ENCODE measurements at regions of chr11 and their contacts with region 1.

Region 1: GRCh38 chr11:124970925-124971324 is 16.9 kb downstream of the CCDC15 start:
- DNase-seq: no peak
- ATAC-seq: peak in 1 of 2 donors; percentile 38

Region 2: GRCh38 chr11:124277804-124278203 is 693.1 kb before region 1 on chr11:
- intact Hi-C with region 1: no loop called
- DNase-seq: no peak
- ATAC-seq: no peak

Region 3: DNA sequence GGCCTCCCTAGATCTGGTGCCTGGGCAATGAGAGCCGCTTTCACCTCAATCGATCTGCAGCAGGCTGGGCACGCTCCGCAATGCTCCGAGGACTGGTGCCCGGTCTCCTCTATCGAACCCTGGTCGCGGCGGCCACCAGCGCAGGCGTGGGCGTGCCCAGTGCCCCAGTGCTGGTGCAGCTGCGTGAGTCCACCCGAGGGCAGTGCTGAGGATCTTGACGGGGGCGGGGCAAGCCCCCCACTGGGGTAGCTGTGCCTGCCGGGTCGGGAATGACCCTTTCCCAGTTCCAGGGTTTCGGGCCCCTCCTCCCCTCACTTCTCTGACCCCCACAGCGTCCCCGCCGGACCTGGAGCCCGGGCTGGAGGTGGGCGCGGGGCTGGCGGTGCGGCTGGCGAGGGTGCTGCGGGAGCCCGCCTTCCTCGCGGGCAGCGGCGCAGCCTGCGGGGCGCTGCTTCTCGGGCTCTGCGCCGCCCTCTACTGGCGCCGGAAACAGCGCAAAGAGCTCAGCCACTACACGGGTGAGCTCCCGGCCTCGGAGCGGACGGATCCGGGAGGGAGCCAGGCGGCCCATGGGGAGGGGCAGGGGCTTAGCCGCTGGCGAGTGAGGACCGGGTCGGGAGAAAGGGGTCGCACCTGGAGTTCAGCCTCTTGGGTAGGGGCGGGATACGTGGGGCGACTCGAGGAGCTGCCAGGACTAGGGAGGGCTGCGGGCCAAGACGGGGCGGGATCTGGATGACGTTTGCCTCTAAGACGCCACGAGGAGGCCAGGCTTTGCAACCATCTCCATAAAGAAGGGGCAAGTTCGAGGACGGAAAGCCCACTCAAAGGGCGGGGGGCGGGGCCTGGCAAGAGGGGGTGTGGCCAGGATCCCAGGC is 94.7 kb before region 1 on chr11:
- intact Hi-C with region 1: no loop called
- DNase-seq: peak; percentile 93
- ATAC-seq: peak; percentile 93 to 94

Region 4: GRCh38 chr11:125091247-125091876 is 120.4 kb after region 1 on chr11:
- intact Hi-C with region 1: no loop called
- DNase-seq: no peak
- ATAC-seq: peak; percentile 90 to 91

Region 5: DNA sequence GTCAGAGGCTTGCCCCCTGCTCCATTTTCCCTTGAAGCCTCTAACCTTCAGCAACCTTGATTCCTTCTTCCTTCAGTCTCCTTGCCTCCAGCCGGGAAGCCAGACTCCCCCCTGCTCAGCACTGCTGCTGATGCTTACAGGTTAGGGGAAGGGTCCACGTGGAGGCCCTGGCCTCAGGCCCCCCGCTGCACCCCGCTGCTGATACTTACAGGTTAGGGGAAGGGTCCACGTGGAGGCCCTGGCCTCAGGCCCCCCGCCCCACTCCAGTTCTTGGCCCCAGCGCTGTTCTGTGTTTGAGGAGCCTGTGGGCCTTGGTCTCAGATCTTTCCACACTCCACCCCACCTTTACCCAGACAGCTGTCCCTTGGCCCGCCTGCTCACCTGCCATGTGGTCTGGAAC is 168.0 kb after region 1 on chr11:
- intact Hi-C with region 1: loop called in 1 of 2 experiments (anchors 5 kb)
- DNase-seq: no peak
- ATAC-seq: no peak